PC-3 (cell line): ENCODE measurements at regions of chr7 and their contacts with region 1.

Region 1: DNA sequence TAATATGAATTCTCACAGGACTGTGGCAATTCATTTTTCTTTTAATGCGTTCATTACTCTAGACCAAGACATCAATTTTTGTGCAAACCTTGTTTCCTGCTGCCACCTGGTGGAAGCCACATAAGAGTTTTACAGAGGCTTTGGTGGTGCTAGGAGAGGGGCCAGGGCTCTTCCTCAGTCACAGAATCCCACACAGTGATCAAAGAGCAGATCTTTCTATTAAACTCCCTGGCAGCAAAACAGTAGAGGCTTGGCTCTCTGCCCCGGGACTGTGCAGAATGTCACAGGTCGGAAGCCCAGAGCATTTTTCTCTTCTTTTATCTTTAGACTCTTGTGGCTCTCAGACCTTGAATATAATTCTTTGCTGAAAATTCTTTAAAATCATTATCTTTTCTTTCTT is 506.4 kb upstream of the C7orf33 start:
- DNase-seq: peak; percentile 69
- ATAC-seq: peak; percentile 95
- H3K4me3 ChIP-seq: no peak overlapping the region
- H3K27ac ChIP-seq: no peak overlapping the region
- H3K4me1 ChIP-seq: no peaks in the 10 kb centered on the region
- H3K27me3 ChIP-seq: no peaks in the 10 kb centered on the region
- CTCF ChIP-seq: peak; percentile 81

Region 2: GRCh38 chr7:146736446-146737190 is 1347.5 kb before region 1 on chr7:
- CTCF ChIA-PET with region 1: no interaction called
- POLR2A ChIA-PET with region 1: no interaction called
- intact Hi-C with region 1: loop called (anchors 1 kb)
- DNase-seq: peak; percentile 39
- ATAC-seq: peak; percentile 89
- H3K4me3 ChIP-seq: no peak overlapping the region
- H3K27ac ChIP-seq: peak overlapping the region; percentile 66
- H3K4me1 ChIP-seq: no peaks in the 10 kb centered on the region; the same call in 1 of the 2 replicates
- H3K27me3 ChIP-seq: no peaks in the 10 kb centered on the region
- CTCF ChIP-seq: 0 out of 2 replicates have a peak, but pooled peaks have one; percentile 21

Region 3: DNA sequence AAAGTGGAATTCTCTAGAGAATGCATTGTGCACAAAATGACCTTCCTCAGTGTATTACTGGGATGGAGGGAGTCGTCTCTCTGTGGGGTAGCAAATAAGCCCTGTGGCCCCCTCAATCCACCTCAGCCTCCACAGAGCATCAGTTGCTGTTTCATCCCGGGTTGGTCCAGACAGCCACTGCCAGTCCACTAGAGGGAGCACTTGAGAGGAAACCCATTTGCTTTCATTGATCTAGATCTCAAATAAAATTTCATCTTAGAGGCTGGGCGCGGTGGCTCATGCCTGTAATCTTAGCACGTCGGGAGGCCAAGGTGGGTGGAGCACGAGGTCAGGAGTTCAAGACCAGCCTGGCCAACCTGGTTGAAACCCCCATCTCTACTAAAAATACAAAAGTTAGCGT is 838.8 kb before region 1 on chr7:
- CTCF ChIA-PET with region 1: no interaction called
- POLR2A ChIA-PET with region 1: no interaction called
- intact Hi-C with region 1: loop called (anchors 1 kb)
- DNase-seq: peak; percentile 76
- ATAC-seq: peak; percentile 51
- H3K4me3 ChIP-seq: no peak overlapping the region
- H3K27ac ChIP-seq: no peak overlapping the region
- H3K4me1 ChIP-seq: no peaks in the 10 kb centered on the region
- H3K27me3 ChIP-seq: no peaks in the 10 kb centered on the region
- CTCF ChIP-seq: peak; percentile 81

Region 4: DNA sequence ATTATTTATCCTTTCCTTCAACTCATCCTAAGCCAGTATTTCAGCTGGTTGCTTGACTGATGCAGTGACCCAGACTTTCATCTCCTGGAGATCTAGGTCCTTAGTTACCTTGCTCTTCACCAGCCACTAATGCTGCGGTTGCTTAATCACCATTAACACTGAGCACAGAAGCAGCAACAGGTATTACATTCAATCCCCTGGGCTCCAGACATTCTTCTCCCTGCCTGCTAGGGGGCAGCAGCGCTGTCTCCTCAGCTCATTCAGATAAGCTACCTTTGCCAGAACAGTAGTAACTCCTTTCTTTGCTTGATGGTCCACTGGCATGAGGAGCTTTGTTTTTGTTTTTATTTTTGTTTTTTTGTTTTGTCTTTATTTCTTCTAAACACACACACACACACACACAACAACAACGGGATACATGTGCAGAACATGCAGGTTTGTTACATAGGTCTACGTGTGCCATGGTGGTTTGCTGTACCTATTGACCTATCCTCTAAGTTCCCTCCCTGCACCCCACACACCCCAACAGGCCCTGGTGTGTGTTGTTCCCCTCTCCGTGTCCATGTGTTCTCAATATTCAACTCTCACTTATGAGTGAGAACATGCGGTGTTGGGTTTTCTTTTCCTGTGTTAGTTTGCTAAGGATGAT is 536.8 kb before region 1 on chr7:
- CTCF ChIA-PET with region 1: no interaction called
- POLR2A ChIA-PET with region 1: no interaction called
- intact Hi-C with region 1: loop called (anchors 2 kb)
- DNase-seq: peak; percentile 66
- ATAC-seq: peak; percentile 81
- H3K4me3 ChIP-seq: no peak overlapping the region
- H3K27ac ChIP-seq: no peak overlapping the region
- H3K4me1 ChIP-seq: no peaks in the 10 kb centered on the region
- H3K27me3 ChIP-seq: no peaks in the 10 kb centered on the region
- CTCF ChIP-seq: peak; percentile 78

Region 5: GRCh38 chr7:148104136-148104716 is 20.1 kb after region 1 on chr7:
- CTCF ChIA-PET with region 1: no interaction called
- POLR2A ChIA-PET with region 1: no interaction called
- intact Hi-C with region 1: no loop called
- DNase-seq: no peak
- ATAC-seq: no peak
- H3K4me3 ChIP-seq: no peak overlapping the region
- H3K27ac ChIP-seq: no peak overlapping the region
- H3K4me1 ChIP-seq: no peaks in the 10 kb centered on the region
- H3K27me3 ChIP-seq: peaks cover 6% of the 10 kb centered on the region; the same call in 1 of the 2 replicates
- CTCF ChIP-seq: no peak

Region 6: DNA sequence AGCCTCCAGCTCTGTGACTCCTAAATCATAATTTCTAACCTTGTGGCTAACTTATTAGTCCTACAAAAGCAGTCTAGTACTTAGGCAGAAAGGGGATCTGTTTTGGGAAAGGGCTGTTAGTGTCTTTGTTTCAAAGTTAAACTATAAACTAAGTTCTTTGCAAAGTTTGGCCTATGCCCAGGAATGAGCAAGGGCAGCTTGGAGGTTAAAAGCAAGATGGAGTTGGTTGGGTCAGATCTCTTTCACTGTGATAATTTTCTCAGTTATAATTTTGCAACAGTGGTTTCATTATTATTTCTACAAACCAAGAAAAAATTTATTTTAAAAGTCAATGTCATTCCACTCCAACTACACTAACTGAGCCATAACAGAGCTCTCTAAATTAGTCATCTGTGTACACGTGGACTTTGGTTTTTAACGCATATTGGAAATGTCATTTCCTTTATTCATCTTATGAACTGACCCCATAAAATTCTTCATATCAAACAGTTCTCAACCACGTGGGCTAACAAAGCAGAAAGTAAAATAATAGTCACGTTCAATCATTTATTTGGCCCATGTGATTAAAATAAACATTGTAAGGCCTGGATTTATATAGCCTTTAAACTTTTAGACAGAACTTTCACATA is 363.2 kb after region 1 on chr7:
- CTCF ChIA-PET with region 1: no interaction called
- POLR2A ChIA-PET with region 1: no interaction called
- intact Hi-C with region 1: no loop called
- DNase-seq: peak; percentile 52
- ATAC-seq: peak; percentile 93
- H3K4me3 ChIP-seq: no peak overlapping the region
- H3K27ac ChIP-seq: no peak overlapping the region
- H3K4me1 ChIP-seq: 0 out of 2 replicates have a peak, but pooled peaks cover 5% of the 10 kb centered on the region
- H3K27me3 ChIP-seq: peaks cover 10% of the 10 kb centered on the region; the same call in 1 of the 2 replicates
- CTCF ChIP-seq: no peak